ENCODE measurements at regions of chr1 and their contacts with region 1.

Region 1: DNA sequence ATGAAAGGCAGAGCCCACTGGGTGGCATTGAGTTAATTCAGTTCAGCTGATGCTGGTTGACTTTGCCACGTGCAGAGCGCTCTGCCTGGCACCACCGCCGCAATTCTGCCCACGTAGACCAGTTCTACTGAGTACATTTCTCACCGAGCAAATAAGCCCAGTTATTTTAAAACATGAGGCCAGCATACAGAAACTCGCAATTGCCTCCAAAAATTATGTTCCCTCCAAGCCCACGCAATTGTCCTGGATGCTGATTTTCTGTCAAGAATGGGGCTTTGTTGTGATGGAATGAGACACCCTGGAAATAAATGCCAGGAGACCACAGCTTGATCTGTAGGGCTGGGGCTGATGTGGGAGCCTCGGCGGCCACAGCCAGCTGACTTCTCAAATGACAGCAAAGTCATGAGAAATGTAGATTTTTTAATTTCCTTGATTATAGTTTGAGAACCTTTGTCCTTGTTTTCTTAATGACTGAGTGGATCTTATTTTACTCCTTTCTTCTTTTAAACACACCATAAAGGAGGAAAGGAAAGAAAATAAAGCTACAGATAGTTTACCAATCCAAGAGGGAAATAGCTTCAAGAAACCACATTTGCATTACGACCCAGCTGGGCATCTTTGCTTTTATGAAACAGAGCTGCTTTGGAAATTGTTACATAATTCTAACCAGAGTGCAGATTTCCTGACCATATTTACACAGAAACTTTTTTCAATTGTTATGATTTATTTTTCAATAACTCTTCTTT is 11.6 kb upstream of the PARP1 start:
- DNase-seq: no peak
- H3K4me3 ChIP-seq: no peak overlapping the region
- H3K27ac ChIP-seq: no peak overlapping the region
- H3K4me1 ChIP-seq: no peaks in the 10 kb centered on the region
- H3K27me3 ChIP-seq: no peaks in the 10 kb centered on the region
- CTCF ChIP-seq: no peak
- POLR2A ChIP-seq: no peak

Region 2: DNA sequence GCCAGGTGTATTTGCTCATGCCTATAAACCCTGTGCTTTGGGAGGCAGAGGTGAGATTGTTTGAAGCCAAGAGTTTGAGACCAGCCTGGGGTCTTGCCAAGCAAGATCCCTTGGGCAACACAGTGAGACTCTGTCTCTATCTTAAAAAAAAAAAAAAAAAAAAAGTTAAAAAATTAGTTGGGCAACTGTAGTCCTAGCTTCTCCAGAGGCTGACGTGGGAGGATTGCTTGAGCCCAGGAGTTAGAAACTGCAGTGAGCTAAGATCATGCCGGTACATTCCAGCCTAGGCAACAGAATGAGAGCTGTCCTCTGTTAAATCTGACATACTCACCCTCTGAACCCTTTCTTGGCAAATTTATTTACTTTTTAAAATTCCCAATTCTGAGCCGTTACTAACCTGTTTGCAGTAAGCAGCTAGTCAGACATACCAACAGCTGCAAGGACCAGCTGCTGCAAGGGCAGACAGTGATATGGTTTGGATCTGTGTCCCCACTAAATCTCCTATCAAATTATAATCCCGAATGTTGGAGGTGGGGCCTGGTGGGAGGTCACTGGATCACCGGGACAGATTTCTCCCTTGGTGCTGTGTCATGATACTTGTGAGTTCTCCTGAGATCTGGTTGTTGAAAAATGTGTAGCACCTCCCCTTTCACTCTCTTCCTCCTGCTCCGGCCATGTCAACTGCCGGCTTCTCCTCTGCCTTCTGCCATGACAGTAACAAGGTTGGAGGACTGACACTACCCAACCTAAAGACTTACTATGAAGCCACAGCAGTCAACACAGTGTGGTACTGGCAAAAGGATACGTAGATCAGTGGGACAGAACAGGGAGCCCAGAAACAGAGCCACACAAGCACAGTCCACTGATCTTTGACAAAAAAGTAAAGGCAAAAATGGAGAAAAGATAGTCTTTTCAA is 22.2 kb before region 1 on chr1:
- intact Hi-C with region 1: no loop called
- DNase-seq: no peak
- H3K4me3 ChIP-seq: no peak overlapping the region
- H3K27ac ChIP-seq: no peak overlapping the region
- H3K4me1 ChIP-seq: no peaks in the 10 kb centered on the region
- H3K27me3 ChIP-seq: no peaks in the 10 kb centered on the region
- CTCF ChIP-seq: no peak
- POLR2A ChIP-seq: no peak

Region 3: DNA sequence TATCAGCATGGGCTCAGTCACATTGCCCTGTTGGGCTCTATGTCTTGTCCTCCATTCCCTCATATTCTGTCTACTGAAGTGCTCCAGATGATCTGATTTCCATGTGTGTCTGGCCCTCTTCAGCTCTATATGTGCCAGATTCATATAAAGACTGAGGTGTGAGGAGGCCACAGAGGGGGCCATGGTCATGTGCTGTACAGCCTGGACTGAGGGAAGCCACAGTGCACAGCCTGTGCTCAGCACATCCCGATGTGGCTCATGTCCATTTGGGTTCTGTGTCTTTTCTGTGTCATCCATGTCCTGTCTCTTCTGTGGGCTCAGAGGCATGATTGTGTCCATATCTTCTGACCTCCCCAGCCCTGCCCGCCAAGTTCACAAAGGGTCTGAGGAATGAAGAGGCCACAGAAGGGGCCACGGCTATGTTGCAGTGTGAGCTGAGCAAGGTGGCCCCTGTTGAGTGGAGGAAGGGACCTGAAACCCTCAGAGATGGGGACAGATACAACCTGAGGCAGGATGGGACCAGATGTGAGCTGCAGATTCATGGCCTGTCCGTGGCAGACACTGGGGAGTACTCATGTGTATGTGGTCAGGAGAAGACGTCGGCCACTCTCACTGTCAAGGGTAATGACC is 1885.4 kb after region 1 on chr1:
- intact Hi-C with region 1: loop called (anchors 5 kb)
- DNase-seq: no peak
- H3K4me3 ChIP-seq: no peak overlapping the region
- H3K27ac ChIP-seq: no peak overlapping the region
- H3K4me1 ChIP-seq: no peaks in the 10 kb centered on the region
- H3K27me3 ChIP-seq: no peaks in the 10 kb centered on the region
- CTCF ChIP-seq: no peak
- POLR2A ChIP-seq: no peak